MCF 10A (cell line): ENCODE measurements at regions of chr11 and their contacts with region 1.

Region 1: DNA sequence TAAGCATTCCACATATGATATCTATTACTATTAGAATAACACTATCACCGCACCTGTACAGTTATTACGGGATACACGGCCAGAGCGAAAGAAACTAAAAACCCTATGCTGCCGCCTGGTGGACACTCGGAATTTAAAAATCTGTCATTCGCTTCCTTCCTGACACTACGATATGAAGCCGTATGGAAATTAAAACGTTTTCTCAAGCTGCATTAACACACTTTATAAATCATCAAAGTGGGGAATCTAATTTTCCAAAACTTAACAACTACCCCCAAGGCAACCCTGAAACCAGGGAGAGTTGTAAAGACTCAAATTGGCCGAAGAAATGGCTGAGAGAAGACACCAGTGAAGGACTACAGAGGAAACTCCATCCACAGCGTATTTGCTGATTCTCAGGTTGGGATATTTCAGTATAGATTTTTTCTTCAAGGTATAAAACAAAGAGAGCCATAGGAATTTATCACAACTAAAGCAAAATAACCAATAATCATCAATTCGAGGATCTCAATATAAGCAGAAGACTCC is 1.4 kb downstream of the CCDC73 start:
- DNase-seq: peak; percentile 66
- H3K4me3 Mint-ChIP-seq: no peak overlapping the region
- H3K27ac Mint-ChIP-seq: no peak overlapping the region
- H3K4me1 Mint-ChIP-seq: peaks cover 5% of the 10 kb centered on the region
- H3K27me3 Mint-ChIP-seq: no peaks in the 10 kb centered on the region
- CTCF ChIP-seq: peak; percentile 62

Region 2: GRCh38 chr11:32385998-32386397 is 407.0 kb before region 1 on chr11:
- CTCF ChIA-PET with region 1: interaction called, 14 read pairs
- POLR2A ChIA-PET with region 1: no interaction called
- intact Hi-C with region 1: loop called (anchors 1 kb)
- DNase-seq: peak; percentile 65
- H3K4me3 Mint-ChIP-seq: no peak overlapping the region
- H3K27ac Mint-ChIP-seq: no peak overlapping the region
- H3K4me1 Mint-ChIP-seq: no peaks in the 10 kb centered on the region
- H3K27me3 Mint-ChIP-seq: peaks cover 6% of the 10 kb centered on the region
- CTCF ChIP-seq: peak; percentile 28

Region 3: DNA sequence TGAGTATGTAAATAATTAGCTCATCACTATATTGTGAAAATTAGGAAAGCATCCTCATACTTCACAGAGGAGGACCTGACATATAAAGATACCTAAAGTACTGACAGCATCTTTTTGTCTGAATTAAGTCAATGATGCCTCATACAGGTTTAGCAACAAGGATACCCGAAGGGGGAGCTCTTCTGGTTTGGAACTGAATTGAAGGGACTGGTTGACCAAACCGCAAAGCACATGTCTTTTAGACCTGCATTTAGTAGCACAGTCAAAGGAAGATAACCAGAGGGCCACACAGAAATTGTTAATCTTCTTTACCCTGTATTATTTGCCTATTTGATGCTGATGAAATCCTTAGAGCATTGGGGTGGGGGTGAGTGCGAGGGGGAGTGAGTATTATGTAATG is 344.8 kb before region 1 on chr11:
- CTCF ChIA-PET with region 1: no interaction called
- POLR2A ChIA-PET with region 1: no interaction called
- intact Hi-C with region 1: no loop called
- DNase-seq: peak; percentile 54
- H3K4me3 Mint-ChIP-seq: no peak overlapping the region
- H3K27ac Mint-ChIP-seq: no peak overlapping the region
- H3K4me1 Mint-ChIP-seq: no peaks in the 10 kb centered on the region
- H3K27me3 Mint-ChIP-seq: peaks cover 9% of the 10 kb centered on the region
- CTCF ChIP-seq: no peak

Region 4: DNA sequence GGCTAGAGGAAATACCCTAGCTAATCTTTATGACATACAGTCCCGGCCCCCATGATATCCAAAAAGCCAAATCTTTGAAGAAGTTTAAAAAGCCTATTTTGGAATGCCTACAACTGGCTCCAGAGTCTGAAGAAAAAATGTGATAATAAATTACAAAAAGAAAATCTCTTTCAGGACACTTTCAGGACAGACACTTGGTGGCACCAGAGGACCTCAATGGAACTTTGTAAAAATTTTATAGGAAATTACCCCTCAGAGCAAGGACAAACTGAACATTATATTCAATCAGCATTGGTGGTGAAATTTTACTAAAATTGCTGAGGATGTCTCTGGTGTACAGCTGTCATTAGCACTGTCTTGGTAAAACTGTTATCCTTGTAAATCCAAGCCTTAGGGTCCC is 79.5 kb before region 1 on chr11:
- CTCF ChIA-PET with region 1: interaction called, 60 read pairs
- POLR2A ChIA-PET with region 1: interaction called, 6 read pairs
- intact Hi-C with region 1: loop called (anchors 1 kb)
- DNase-seq: peak; percentile 8
- H3K4me3 Mint-ChIP-seq: no peak overlapping the region
- H3K27ac Mint-ChIP-seq: no peak overlapping the region
- H3K4me1 Mint-ChIP-seq: no peaks in the 10 kb centered on the region
- H3K27me3 Mint-ChIP-seq: no peaks in the 10 kb centered on the region
- CTCF ChIP-seq: peak; percentile 36

Region 5: DNA sequence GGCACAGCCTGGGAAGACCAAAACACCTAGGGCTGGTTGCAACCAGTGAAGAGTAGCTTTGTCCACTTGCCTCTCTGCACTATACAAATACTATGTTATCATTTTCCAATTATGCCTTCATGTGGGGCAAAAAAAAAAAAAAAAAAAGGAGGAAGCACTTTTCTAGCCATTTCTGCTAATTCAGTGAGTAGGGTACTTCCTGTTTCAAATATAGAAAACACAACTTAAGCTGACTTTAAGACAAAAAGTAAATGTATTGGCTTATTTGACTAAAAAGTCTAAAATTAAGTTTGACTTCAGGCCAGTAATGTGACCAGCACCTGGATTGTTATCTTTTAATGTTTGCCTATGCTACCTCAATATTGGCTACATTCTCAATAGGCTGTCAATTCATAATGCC is 13.9 kb before region 1 on chr11:
- CTCF ChIA-PET with region 1: interaction called, 14 read pairs
- POLR2A ChIA-PET with region 1: no interaction called
- intact Hi-C with region 1: no loop called
- DNase-seq: no peak
- H3K4me3 Mint-ChIP-seq: no peak overlapping the region
- H3K27ac Mint-ChIP-seq: no peak overlapping the region
- H3K4me1 Mint-ChIP-seq: peaks cover 11% of the 10 kb centered on the region
- H3K27me3 Mint-ChIP-seq: no peaks in the 10 kb centered on the region
- CTCF ChIP-seq: no peak